Left cardiac atrium (tissue), 4 donors: ENCODE measurements at regions of chr10 and their contacts with region 1.

Region 1: GRCh38 chr10:87734987-87735827 is 75.5 kb downstream of the PAPSS2 start:
- DNase-seq: no peak
- ATAC-seq: peak; percentile 73 to 76

Region 2: DNA sequence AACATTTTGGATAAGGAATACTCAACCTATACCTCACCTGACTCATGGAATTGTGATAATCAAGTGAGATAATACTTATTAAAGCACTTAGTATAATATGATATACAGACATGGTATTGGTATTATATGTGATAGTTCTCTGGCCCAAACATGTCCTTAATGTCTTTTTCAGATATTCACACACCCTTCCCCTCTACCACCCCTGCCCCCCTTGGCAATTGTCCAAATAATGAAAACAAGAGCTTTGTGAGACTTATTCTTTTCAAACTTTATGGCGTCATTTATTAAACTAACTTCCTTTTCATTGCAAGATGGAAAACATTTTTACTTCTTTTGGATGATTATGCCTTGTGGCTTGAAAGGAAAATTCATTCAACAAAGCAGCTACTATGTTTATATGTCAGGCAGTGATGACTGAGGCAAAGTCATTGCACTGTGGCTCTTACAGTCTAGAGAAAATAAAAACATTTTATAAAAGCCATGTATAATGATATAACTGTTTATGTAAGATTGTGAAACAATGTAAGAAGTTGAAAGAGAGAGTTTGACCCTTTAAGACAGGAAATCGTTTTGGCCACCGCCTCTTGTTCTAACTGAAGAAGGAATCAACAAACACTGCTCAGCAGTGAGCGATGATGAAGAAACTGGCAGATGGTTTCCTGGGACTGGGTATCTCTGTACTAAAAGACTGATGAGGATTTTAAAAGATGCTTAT is 203.1 kb before region 1 on chr10:
- intact Hi-C with region 1: loop called in 1 of 2 experiments (anchors 5 kb)
- DNase-seq: peak; percentile 52
- ATAC-seq: peak in 1 of 2 donors; percentile 58

Region 3: GRCh38 chr10:87659571-87660483 is 75.4 kb before region 1 on chr10 and contains the start of gene PAPSS2:
- intact Hi-C with region 1: loop called (anchors 1 to 5 kb)
- DNase-seq: peak; percentile 77
- ATAC-seq: peak; percentile 87 to 88
- total RNA-seq, gene PAPSS2: 14.7 to 24.0 TPM

Region 4: DNA sequence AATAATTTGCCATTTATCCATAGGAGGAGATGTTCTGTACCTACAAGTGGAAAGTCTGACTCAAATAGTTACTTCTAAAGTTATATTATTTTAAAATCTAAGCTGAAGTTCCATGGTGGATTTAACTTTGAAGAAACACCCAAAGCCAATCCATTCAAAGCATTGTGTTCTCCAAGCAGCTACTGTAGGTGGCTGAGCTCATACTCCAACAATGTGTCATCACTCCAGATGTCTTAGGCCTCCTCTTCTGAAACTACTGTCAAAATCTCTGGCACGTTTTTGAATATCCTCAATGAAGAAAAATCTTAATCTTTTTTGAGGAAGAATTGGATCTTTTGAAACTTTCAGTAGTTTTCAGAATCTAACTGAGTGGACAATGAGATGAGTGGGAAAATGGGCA is 297.4 kb after region 1 on chr10:
- intact Hi-C with region 1: no loop called
- DNase-seq: no peak
- ATAC-seq: no peak